ENCODE measurements at regions of chr9 and their contacts with region 1.

Region 1: GRCh38 chr9:4713849-4714248 is 27.2 kb downstream of the AK3 start:
- DNase-seq: no peak
- ATAC-seq: no peak
- H3K4me3 ChIP-seq: no peak overlapping the region
- H3K27ac ChIP-seq: no peak overlapping the region
- H3K4me1 ChIP-seq: no peaks in the 10 kb centered on the region
- H3K27me3 ChIP-seq: no peaks in the 10 kb centered on the region
- CTCF ChIP-seq: no peak
- POLR2A ChIP-seq: no peak
- RAD21 ChIP-seq: no peak

Region 2: DNA sequence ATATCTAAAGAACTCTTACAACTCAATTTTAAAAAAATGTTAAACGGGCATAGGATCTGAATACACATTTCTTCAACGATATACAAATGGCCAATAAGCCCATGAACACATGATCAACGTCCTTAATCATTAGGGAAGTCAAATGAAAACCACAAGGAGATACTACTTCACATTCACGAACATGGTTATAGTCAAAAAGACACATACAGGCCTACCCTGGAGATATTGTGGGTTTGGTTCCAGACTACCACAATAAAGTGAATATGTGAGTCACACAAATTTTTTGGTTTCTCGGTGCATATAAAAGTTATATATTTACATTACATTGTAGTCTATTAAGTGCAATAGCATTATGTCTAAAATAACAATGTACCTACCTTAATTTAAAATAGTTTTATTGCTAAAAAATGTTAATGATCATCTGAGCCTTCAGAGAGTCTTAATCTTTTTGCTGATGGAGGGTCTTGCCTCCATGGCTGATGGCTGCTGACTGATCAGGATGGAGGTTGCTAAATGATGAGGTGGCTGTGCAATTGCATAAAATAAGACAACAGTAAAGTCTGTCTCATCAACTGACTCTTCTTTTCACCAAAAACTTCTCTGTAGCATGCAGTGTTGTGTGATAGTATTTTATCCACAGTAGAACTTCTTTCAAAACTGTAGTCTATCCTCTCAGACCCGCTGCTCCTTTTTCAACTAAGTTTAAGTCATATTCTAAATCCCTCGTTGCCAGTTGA is 12.0 kb after region 1 on chr9:
- CTCF ChIA-PET with region 1: no interaction called
- POLR2A ChIA-PET with region 1: interaction called, 3 read pairs
- dilution Hi-C with region 1: no loop called
- in situ Hi-C with region 1: no loop called
- intact Hi-C with region 1: loop called (anchors 1 kb)
- DNase-seq: no peak
- ATAC-seq: no peak
- H3K4me3 ChIP-seq: no peak overlapping the region
- H3K27ac ChIP-seq: no peak overlapping the region
- H3K4me1 ChIP-seq: no peaks in the 10 kb centered on the region
- H3K27me3 ChIP-seq: no peaks in the 10 kb centered on the region
- CTCF ChIP-seq: no peak
- POLR2A ChIP-seq: no peak
- RAD21 ChIP-seq: no peak

Region 3: GRCh38 chr9:4792572-4793458 is 79.0 kb after region 1 on chr9 and contains the start of gene RCL1:
- CTCF ChIA-PET with region 1: no interaction called
- POLR2A ChIA-PET with region 1: no interaction called
- dilution Hi-C with region 1: no loop called
- in situ Hi-C with region 1: no loop called
- intact Hi-C with region 1: no loop called
- DNase-seq: peak; percentile 92
- ATAC-seq: peak; percentile 98
- H3K4me3 ChIP-seq: peak within 1 kb of the TSS; percentile 86
- H3K27ac ChIP-seq: peak within 1 kb of the TSS; percentile 65
- H3K4me1 ChIP-seq: peaks cover 3% of the 10 kb centered on the region; the same call in 1 of the 2 replicates
- H3K27me3 ChIP-seq: no peaks in the 10 kb centered on the region
- CTCF ChIP-seq: no peak
- POLR2A ChIP-seq: peak; percentile 81
- RAD21 ChIP-seq: no peak; the same call in 1 of the 2 replicates
- total RNA-seq, gene RCL1: 13.8 and 14.7 TPM in 2 replicates

Measured in IMR-90 (cell line).